IMR-90 (cell line): ENCODE measurements at regions of chr7 and their contacts with region 1.

Region 1: DNA sequence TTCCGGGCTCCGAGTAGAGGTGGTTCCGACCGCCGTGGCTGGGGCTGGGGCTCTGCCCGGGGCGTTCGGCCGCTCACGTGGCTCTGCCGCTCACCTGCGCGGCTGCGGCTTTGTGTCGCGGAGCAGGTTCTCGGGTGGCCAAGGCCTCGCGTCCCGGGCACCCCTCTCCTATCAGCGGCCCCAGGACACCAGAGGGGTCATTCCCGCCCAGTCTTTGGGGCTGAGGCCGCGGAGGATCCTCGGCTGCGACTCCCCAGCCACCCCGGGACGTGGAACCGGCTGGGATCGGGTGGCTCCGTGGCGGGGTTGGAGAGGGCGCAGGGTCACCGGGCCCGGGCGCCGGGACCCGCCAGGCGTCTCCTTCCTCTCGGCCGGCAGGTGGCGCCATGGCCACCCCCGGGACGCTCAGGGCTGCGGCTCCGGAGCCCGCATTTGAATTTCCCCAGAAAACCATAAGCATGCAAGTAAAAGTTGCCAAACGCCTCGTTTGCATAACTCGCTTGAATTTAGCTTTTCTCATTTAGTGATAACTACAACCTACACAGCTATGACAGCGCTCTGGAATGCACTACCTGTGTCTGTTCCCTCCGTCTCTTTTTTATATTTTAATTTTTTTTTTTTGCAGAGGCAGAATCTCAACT is 1.2 kb downstream of the COL26A1 start:
- DNase-seq: peak; percentile 40
- ATAC-seq: peak; percentile 95
- H3K4me3 ChIP-seq: peak overlapping the region; percentile 31
- H3K27ac ChIP-seq: no peak overlapping the region
- H3K4me1 ChIP-seq: no peaks in the 10 kb centered on the region
- H3K27me3 ChIP-seq: peaks cover 36% of the 10 kb centered on the region
- CTCF ChIP-seq: peak; percentile 78
- POLR2A ChIP-seq: no peak
- RAD21 ChIP-seq: peak; percentile 68

Region 2: DNA sequence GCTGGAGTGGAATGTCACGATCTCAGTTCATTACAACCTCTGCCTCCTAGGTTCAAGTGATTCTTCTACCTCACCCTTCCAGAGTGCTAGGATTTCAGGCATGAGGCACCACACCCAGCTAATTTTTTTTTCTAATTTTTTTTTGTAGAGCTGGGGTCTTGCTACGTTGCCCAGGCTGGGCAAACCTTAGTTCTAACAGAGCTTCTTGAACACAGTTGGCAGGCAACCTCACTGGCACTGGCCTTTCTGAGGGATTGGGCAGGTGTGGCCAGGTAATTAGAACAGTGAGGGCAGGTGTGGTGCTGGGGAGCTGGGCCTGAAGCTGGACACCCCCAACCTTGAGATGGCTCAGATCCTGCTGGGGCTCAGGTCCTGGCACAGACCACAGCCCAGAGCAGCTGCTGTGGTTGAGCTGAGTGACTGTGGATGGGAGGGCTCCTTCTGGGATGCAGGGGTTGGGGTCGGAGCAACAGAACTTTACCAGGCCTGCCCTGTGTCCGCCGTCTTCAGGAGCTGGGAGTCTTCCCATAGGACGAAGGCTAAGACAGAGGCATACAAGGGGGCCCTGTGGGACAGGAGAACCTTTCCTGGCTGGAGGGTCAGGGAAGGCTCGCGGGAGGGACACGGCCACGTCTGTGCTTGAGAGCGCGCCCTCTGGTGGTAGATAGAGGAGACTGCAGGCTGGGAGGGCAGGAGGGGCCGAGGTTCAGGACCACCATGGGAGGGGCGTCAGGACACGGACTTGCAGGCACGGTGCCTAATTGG is 47.1 kb after region 1 on chr7:
- CTCF ChIA-PET with region 1: no interaction called
- POLR2A ChIA-PET with region 1: no interaction called
- dilution Hi-C with region 1: no loop called
- in situ Hi-C with region 1: no loop called
- intact Hi-C with region 1: no loop called
- DNase-seq: no peak
- ATAC-seq: peak; percentile 84
- H3K4me3 ChIP-seq: no peak overlapping the region
- H3K27ac ChIP-seq: no peak overlapping the region
- H3K4me1 ChIP-seq: no peaks in the 10 kb centered on the region
- H3K27me3 ChIP-seq: peaks cover 30% of the 10 kb centered on the region
- CTCF ChIP-seq: peak; percentile 57
- POLR2A ChIP-seq: no peak
- RAD21 ChIP-seq: peak; percentile 42

Region 3: DNA sequence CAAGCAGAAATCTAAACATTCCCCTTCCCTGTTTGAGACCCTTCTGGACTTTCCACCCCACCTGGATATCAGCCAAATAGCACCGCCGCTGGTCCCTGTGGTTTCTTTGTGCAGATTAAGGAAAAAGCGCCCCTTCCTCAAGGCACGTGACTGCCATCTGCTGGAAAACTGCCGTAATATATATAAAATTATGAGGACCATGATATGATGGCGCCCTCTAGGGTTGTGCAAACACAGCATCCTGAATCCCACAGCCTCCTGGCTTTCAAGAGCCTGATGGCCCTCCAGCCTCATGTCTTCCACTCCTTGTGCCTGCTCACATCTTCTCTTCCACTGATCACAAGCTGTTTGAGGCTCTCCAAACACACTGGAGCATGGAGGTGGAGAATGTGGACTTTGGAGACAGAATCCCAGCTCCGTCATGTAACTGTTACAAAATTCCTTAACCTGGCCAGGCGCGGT is 144.0 kb after region 1 on chr7:
- CTCF ChIA-PET with region 1: no interaction called
- POLR2A ChIA-PET with region 1: no interaction called
- dilution Hi-C with region 1: no loop called
- in situ Hi-C with region 1: no loop called
- intact Hi-C with region 1: loop called (anchors 5 kb)
- DNase-seq: peak; percentile 42
- ATAC-seq: peak; percentile 59
- H3K4me3 ChIP-seq: no peak overlapping the region
- H3K27ac ChIP-seq: no peak overlapping the region
- H3K4me1 ChIP-seq: no peaks in the 10 kb centered on the region
- H3K27me3 ChIP-seq: peaks cover 31% of the 10 kb centered on the region
- CTCF ChIP-seq: peak; percentile 88
- POLR2A ChIP-seq: no peak
- RAD21 ChIP-seq: peak; percentile 55

Region 4: DNA sequence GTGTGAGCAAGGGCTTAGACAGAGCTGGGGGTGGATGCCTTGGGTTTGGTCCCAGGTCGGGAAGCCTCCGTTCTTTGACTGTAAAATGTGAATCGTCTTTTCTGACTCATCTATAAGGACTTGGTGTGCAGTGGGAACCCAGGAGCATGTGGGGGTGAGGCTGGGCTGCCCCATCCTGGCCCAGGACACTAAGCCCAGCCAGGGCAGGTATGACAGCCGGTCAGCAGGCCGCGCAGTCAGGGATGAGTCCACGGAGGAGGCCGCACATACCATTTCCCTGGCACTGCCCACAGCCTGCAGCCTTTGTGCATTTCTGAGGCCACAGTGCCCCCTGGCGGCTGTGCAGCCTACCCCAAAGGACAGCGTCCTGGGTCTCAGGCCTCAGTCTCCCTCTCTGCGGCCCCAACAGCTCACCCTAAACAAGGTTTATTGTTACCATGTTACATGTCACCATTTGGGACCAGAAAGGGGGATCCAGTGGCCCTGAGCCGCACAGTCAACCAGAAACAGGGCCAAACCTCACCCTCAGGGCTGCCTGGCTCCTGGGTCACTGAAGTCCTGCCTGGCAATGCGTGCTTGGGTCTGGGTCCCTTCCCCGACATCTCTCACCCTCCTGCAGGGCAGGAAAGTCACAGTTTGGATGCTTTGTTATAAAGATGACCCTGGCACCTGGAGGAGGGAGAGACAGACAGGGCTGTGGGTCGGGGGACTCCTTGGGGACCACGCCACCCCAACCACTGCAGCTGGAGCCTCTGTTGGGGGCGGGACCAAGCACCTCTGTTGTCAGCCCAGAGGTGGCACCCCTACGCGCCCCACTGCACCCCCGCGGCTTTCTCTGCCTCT is 908.4 kb after region 1 on chr7:
- CTCF ChIA-PET with region 1: no interaction called
- POLR2A ChIA-PET with region 1: no interaction called
- dilution Hi-C with region 1: no loop called
- in situ Hi-C with region 1: loop called (anchors 25 kb)
- intact Hi-C with region 1: no loop called
- DNase-seq: peak; percentile 81
- ATAC-seq: peak; percentile 89
- H3K4me3 ChIP-seq: no peak overlapping the region
- H3K27ac ChIP-seq: no peak overlapping the region
- H3K4me1 ChIP-seq: peaks cover 12% of the 10 kb centered on the region
- H3K27me3 ChIP-seq: no peaks in the 10 kb centered on the region
- CTCF ChIP-seq: peak; percentile 94
- POLR2A ChIP-seq: no peak
- RAD21 ChIP-seq: peak; percentile 94